ENCODE measurements at regions of chr1 and their contacts with region 1.

Region 1: GRCh38 chr1:15436881-15437442 is 1.3 kb upstream of the CTRC start:
- DNase-seq: no peak
- H3K4me3 Mint-ChIP-seq: no peak overlapping the region
- H3K27ac Mint-ChIP-seq: no peak overlapping the region
- H3K4me1 Mint-ChIP-seq: no peaks in the 10 kb centered on the region
- H3K27me3 Mint-ChIP-seq: no peaks in the 10 kb centered on the region

Region 2: GRCh38 chr1:15449567-15449966 is 12.6 kb after region 1 on chr1:
- CTCF ChIA-PET with region 1: no interaction called
- POLR2A ChIA-PET with region 1: no interaction called
- intact Hi-C with region 1: no loop called
- DNase-seq: no peak
- H3K4me3 Mint-ChIP-seq: no peak overlapping the region
- H3K27ac Mint-ChIP-seq: no peak overlapping the region
- H3K4me1 Mint-ChIP-seq: no peaks in the 10 kb centered on the region
- H3K27me3 Mint-ChIP-seq: peaks cover 4% of the 10 kb centered on the region

Region 3: DNA sequence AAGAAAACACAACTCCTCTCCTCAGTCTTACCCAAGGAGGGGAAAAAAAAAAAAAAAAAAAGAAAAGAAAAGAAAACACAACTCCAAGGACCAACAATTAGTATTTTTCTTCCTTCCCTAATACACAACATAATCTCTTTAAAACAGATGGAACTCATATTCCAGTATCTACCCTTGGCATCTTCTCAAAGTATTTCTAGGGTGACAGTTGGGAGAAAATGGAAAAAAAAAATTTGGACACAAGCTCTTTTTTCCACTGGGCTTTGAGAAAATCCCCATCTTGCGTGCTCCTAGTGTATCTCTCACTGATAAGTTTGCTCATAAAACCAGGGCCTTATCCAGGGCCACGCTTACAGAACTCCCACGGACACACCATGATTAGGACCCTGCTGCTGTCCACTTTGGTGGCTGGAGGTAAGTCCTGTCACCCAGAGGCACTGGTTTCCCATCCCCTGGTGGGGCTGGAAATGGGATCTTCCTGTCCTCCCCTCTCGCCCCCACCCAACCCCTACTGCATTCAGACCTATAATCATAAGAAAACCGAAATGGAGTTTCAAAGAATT is 38.9 kb after region 1 on chr1 and contains the start of gene CELA2B:
- CTCF ChIA-PET with region 1: no interaction called
- POLR2A ChIA-PET with region 1: no interaction called
- intact Hi-C with region 1: loop called (anchors 2 kb)
- DNase-seq: no peak
- H3K4me3 Mint-ChIP-seq: no peak within 1 kb of the TSS
- H3K27ac Mint-ChIP-seq: no peak within 1 kb of the TSS
- H3K4me1 Mint-ChIP-seq: no peaks in the 10 kb centered on the region
- H3K27me3 Mint-ChIP-seq: no peaks in the 10 kb centered on the region
- total RNA-seq, gene CELA2B: not detected

Region 4: GRCh38 chr1:15934211-15935055 is 497.5 kb after region 1 on chr1:
- CTCF ChIA-PET with region 1: no interaction called
- POLR2A ChIA-PET with region 1: no interaction called
- intact Hi-C with region 1: no loop called
- DNase-seq: no peak
- H3K4me3 Mint-ChIP-seq: no peak overlapping the region
- H3K27ac Mint-ChIP-seq: peak overlapping the region; percentile 13
- H3K4me1 Mint-ChIP-seq: peaks cover 10% of the 10 kb centered on the region
- H3K27me3 Mint-ChIP-seq: no peaks in the 10 kb centered on the region

Measured in activated CD4-positive, alpha-beta memory T cell treated with anti-CD3 and anti-CD28 coated beads for 36 hours (primary cell).